Activated CD4-positive, alpha-beta T cell treated with anti-CD3 and anti-CD28 coated beads, Interleukin-2, amount 10 ng/mL, durations not matched to agents 24 days and 14 days (primary cell): ENCODE measurements at regions of chr16 and their contacts with region 1.

Region 1: DNA sequence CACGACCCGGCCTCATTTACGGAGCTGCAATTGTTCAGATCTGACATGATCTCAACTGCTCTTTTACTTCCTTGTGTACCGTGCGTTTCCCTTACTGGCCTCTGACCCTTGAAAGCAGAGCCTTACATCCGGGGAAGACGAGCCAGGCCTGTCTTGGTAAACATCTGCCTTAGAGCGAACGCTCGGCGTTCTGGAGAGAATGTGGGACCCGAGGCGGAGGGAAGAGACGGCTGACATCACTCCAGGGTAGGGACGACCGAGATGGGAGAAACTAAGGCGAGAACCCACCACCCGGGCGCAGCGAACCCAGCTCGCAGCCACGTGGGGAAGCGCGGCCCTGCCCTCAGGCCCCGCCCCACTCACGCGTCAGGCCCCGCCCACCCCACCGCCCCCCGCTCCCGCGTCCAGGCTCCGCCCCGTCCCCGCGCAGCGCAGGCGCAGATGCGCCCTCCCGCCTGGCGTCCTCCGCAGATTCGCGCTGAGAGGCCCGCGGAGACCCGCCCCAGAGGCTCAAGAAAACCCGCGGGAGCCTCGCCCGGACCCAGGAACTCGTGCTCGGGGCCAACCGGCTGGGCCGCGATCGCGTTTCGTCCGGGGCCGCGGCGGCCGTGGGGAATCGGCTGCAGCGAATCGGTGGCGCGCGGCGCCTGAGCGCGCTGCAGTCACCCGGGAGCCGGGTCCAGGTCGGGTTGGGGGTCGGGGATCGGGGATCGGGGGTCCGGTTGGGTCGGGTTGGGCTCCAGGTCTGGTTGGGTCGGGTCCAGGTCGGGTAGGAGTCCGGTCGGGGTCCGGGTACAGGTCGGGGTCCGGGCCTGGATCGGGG is at the start of gene TELO2:
- DNase-seq: peak; percentile 97
- H3K4me3 Mint-ChIP-seq: peak within 1 kb of the TSS; percentile 88
- H3K27ac Mint-ChIP-seq: peak within 1 kb of the TSS; percentile 96
- H3K4me1 Mint-ChIP-seq: peaks cover 10% of the 10 kb centered on the region
- H3K27me3 Mint-ChIP-seq: no peaks in the 10 kb centered on the region
- total RNA-seq, gene TELO2: 91.4 and 101 TPM in 2 replicates

Region 2: GRCh38 chr16:1428511-1428910 is 64.6 kb before region 1 on chr16:
- intact Hi-C with region 1: loop called (anchors 2 kb)
- DNase-seq: peak; percentile 86
- H3K4me3 Mint-ChIP-seq: no peak overlapping the region
- H3K27ac Mint-ChIP-seq: no peak overlapping the region
- H3K4me1 Mint-ChIP-seq: no peaks in the 10 kb centered on the region
- H3K27me3 Mint-ChIP-seq: no peaks in the 10 kb centered on the region

Region 3: GRCh38 chr16:1474796-1475551 is 18.2 kb before region 1 on chr16 and contains the start of gene CLCN7:
- intact Hi-C with region 1: loop called (anchors 1 kb)
- DNase-seq: peak; percentile 97
- H3K4me3 Mint-ChIP-seq: peak within 1 kb of the TSS; percentile 89
- H3K27ac Mint-ChIP-seq: peak within 1 kb of the TSS; percentile 87
- H3K4me1 Mint-ChIP-seq: peaks cover 9% of the 10 kb centered on the region
- H3K27me3 Mint-ChIP-seq: no peaks in the 10 kb centered on the region
- total RNA-seq, gene CLCN7: 56.5 and 58.0 TPM in 2 replicates

Region 4: GRCh38 chr16:1534021-1535020 is 41.2 kb after region 1 on chr16:
- intact Hi-C with region 1: loop called (anchors 2 kb)
- DNase-seq: peak; percentile 70
- H3K4me3 Mint-ChIP-seq: peak overlapping the region; percentile 100
- H3K27ac Mint-ChIP-seq: peak overlapping the region; percentile 94
- H3K4me1 Mint-ChIP-seq: peaks cover 37% of the 10 kb centered on the region
- H3K27me3 Mint-ChIP-seq: no peaks in the 10 kb centered on the region

Region 5: GRCh38 chr16:1543085-1543896 is 50.2 kb after region 1 on chr16:
- intact Hi-C with region 1: loop called (anchors 2 kb)
- DNase-seq: peak; percentile 83
- H3K4me3 Mint-ChIP-seq: peak overlapping the region; percentile 70
- H3K27ac Mint-ChIP-seq: peak overlapping the region; percentile 88
- H3K4me1 Mint-ChIP-seq: peaks cover 35% of the 10 kb centered on the region
- H3K27me3 Mint-ChIP-seq: no peaks in the 10 kb centered on the region

Region 6: GRCh38 chr16:1564325-1564724 is 71.2 kb after region 1 on chr16:
- intact Hi-C with region 1: no loop called
- DNase-seq: peak; percentile 67
- H3K4me3 Mint-ChIP-seq: no peak overlapping the region
- H3K27ac Mint-ChIP-seq: no peak overlapping the region
- H3K4me1 Mint-ChIP-seq: peaks cover 11% of the 10 kb centered on the region
- H3K27me3 Mint-ChIP-seq: no peaks in the 10 kb centered on the region